ENCODE measurements at regions of chr2 and their contacts with region 1.

Region 1: DNA sequence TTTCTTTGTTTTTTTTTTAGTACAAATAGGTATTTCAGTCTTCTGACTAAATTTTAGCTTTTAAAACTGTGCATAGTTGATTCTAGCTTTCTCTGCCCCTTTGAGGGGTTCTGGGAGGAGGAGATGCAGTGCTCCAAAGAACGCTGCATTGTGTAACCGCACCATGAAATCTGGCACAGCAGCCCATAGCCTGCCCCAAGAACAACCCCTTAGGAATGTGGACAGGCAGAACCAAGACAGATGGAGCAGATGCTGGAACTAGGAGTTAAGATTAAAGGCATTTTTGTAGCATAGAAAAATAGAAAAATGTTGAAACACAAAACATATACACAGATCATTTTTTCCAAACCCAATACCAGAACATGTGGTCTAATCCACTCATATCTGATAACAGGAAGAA is 187.5 kb downstream of the SCG2 start:
- DNase-seq: peak; percentile 77 to 84
- H3K4me3 ChIP-seq: no peak overlapping the region
- H3K27ac ChIP-seq: peak overlapping the region; percentile 2 to 67
- H3K4me1 ChIP-seq: peaks cover 0 to 56% (median 19%) of the 10 kb centered on the region in 4 donors
- H3K27me3 ChIP-seq: no peaks in the 10 kb centered on the region
- CTCF ChIP-seq: no peak

Region 2: DNA sequence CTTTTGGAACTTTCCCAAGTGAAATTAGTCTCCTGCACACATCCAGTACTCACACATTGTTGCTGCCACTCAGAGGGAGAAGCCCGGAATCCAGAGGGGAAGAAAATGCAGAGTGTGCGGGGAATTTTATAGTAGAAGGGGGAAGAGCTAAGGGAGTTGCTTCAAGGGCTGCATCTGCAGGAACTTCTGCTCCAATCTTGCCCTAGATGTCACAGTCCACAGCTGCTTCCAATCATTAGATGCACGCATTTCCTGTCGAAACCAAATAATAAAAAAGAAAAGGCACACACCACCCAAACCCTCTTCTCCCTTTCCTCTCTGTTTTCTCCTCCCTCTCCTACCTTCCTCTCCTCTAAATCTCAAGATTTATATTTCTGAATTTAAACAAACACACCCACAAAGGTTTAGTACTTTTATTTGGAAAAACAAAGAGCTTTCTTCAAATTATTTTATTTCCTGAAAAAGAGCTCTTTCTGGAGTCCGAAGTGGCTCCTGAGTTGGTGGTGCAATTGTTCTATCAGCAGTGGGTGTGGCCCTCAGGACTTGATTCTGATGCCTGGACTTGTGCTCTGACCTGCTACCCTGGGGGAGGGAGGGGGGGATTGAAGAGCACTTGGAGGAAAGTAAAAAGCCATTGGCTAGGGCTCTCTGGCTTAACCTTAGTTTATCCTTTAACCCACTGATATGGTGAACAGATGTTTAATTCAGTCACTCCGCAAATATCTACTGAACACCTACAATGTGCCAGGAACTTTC is 290.6 kb before region 1 on chr2:
- intact Hi-C with region 1: no loop called
- DNase-seq: no peak
- H3K4me3 ChIP-seq: no peak overlapping the region
- H3K27ac ChIP-seq: no peak overlapping the region
- H3K4me1 ChIP-seq: no peaks in the 10 kb centered on the region
- H3K27me3 ChIP-seq: no peaks in the 10 kb centered on the region
- CTCF ChIP-seq: no peak

Region 3: DNA sequence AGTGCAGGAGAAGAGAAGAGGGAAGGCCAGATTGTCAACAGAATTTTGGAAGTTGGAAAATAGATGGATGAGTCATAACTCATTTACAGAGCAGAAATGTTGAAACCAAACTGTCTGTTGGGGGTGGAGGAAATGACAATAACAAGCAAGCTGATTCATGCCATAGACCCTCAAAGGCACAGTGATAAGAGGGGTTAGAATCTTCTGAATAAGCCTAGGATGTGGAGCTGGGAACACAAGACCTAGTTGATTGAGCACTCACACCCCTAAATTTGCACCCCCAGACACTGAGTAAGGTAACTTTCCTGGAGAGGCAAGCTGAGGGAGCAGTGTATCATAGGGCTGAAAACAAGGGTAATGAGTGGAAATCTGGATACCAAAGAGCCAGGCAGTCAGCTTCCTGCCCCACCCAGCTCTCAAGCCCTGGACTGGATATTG is 46.1 kb after region 1 on chr2:
- intact Hi-C with region 1: loop called (anchors 5 kb)
- DNase-seq: no peak
- H3K4me3 ChIP-seq: no peak overlapping the region
- H3K27ac ChIP-seq: no peak overlapping the region
- H3K4me1 ChIP-seq: peaks cover 0 to 23% (median 0%) of the 10 kb centered on the region in 4 donors
- H3K27me3 ChIP-seq: no peaks in the 10 kb centered on the region
- CTCF ChIP-seq: no peak

Region 4: DNA sequence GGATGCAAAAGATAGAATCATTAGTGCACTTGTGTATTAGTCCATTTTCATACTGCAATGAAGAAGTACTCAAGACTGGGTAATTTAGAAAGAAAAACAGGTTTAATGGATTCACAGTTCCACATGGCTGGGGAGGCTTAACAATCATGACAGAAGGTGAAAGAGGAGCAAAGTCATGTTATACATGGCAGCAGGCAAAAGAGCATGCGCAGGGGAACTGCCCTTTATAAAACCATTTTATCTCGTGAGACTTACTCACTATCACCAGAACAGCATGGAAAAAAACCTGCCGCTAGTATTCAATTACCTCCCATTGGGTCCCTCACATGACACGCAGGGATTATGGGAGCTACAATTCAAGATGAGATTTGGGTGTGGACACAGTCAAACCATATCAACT is 58.1 kb after region 1 on chr2:
- intact Hi-C with region 1: no loop called
- DNase-seq: no peak
- H3K4me3 ChIP-seq: no peak overlapping the region
- H3K27ac ChIP-seq: no peak overlapping the region
- H3K4me1 ChIP-seq: peaks cover 6 to 32% (median 21%) of the 10 kb centered on the region in 4 donors
- H3K27me3 ChIP-seq: no peaks in the 10 kb centered on the region
- CTCF ChIP-seq: no peak

Region 5: GRCh38 chr2:225122583-225123486 is 1708.2 kb after region 1 on chr2:
- intact Hi-C with region 1: no loop called
- DNase-seq: no peak
- H3K4me3 ChIP-seq: no peak overlapping the region
- H3K27ac ChIP-seq: no peak overlapping the region
- H3K4me1 ChIP-seq: peaks cover 0 to 2% (median 0%) of the 10 kb centered on the region in 4 donors
- H3K27me3 ChIP-seq: no peaks in the 10 kb centered on the region
- CTCF ChIP-seq: peak; percentile 7 to 34